SK-N-SH (cell line): ENCODE measurements at regions of chr9 and their contacts with region 1.

Region 1: GRCh38 chr9:108565651-108566378 is 290.0 kb downstream of the ACTL7B start:
- DNase-seq: peak; percentile 52
- H3K4me3 ChIP-seq: no peak overlapping the region; a peak in 1 of 4 replicates
- H3K27ac ChIP-seq: no peak overlapping the region
- H3K4me1 ChIP-seq: no peaks in the 10 kb centered on the region
- H3K27me3 ChIP-seq: peaks cover 8% of the 10 kb centered on the region; the same call in 1 of the 2 replicates
- CTCF ChIP-seq: peak; percentile 94
- EP300 ChIP-seq: no peak
- RAD21 ChIP-seq: peak; percentile 93

Region 2: GRCh38 chr9:107465467-107466451 is 1100.1 kb before region 1 on chr9:
- CTCF ChIA-PET with region 1: interaction called, 49 read pairs
- POLR2A ChIA-PET with region 1: no interaction called
- DNase-seq: peak; percentile 84
- H3K4me3 ChIP-seq: peak overlapping the region; percentile 43 to 65
- H3K27ac ChIP-seq: no peak overlapping the region
- H3K4me1 ChIP-seq: no peaks in the 10 kb centered on the region; a peak in 1 of 4 replicates
- H3K27me3 ChIP-seq: peaks cover 40% of the 10 kb centered on the region
- CTCF ChIP-seq: peak; percentile 71
- EP300 ChIP-seq: peak in 1 of 2 experiments; percentile 7; a peak in 1 of 4 replicates
- RAD21 ChIP-seq: peak; percentile 58

Region 3: DNA sequence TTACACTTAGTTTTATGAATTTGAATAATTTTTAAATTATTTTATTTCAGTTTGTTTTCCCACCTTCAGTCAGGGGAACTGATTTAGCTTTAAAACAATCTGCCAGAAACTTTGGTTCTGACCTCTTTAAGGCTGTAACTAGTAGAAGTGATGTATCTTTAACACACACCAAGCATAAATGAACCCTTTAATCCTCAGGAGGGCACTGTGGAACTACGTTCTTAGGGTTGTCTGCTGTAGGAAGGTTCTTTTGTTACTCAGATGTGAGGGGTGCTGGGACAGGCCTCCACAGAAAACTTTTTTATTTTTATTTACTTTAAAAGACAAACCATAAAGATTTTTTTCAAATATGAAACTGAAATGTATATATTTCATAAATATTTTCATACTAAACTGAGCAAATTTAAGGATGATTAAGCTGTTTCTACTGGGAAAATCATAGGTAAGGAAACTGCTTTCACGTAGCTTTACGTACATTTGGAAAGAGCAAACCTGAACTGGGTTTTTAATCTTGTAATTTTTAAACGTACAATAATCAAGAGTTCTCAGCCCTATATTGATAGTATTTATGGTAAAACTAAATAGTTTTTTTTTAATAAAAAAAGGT is 1081.6 kb before region 1 on chr9:
- CTCF ChIA-PET with region 1: interaction called, 13 read pairs
- POLR2A ChIA-PET with region 1: no interaction called
- DNase-seq: peak; percentile 52
- H3K4me3 ChIP-seq: no peak overlapping the region; a peak in 1 of 4 replicates
- H3K27ac ChIP-seq: no peak overlapping the region
- H3K4me1 ChIP-seq: peaks cover 0 to 5% of the 10 kb centered on the region in 2 experiments; a peak in 1 of 4 replicates
- H3K27me3 ChIP-seq: peaks cover 32% of the 10 kb centered on the region
- CTCF ChIP-seq: peak; percentile 78
- EP300 ChIP-seq: no peak
- RAD21 ChIP-seq: peak; percentile 77

Region 4: GRCh38 chr9:108586456-108586855 is 20.6 kb after region 1 on chr9:
- CTCF ChIA-PET with region 1: interaction called, 10 read pairs
- POLR2A ChIA-PET with region 1: no interaction called
- DNase-seq: no peak
- H3K4me3 ChIP-seq: no peak overlapping the region
- H3K27ac ChIP-seq: no peak overlapping the region
- H3K4me1 ChIP-seq: no peaks in the 10 kb centered on the region
- H3K27me3 ChIP-seq: peaks cover 12% of the 10 kb centered on the region; the same call in 1 of the 2 replicates
- CTCF ChIP-seq: no peak
- EP300 ChIP-seq: no peak
- RAD21 ChIP-seq: no peak